Activated CD4-positive, alpha-beta memory T cell treated with anti-CD3 and anti-CD28 coated beads for 36 hours (primary cell): ENCODE measurements at regions of chr11 and their contacts with region 1.

Region 1: DNA sequence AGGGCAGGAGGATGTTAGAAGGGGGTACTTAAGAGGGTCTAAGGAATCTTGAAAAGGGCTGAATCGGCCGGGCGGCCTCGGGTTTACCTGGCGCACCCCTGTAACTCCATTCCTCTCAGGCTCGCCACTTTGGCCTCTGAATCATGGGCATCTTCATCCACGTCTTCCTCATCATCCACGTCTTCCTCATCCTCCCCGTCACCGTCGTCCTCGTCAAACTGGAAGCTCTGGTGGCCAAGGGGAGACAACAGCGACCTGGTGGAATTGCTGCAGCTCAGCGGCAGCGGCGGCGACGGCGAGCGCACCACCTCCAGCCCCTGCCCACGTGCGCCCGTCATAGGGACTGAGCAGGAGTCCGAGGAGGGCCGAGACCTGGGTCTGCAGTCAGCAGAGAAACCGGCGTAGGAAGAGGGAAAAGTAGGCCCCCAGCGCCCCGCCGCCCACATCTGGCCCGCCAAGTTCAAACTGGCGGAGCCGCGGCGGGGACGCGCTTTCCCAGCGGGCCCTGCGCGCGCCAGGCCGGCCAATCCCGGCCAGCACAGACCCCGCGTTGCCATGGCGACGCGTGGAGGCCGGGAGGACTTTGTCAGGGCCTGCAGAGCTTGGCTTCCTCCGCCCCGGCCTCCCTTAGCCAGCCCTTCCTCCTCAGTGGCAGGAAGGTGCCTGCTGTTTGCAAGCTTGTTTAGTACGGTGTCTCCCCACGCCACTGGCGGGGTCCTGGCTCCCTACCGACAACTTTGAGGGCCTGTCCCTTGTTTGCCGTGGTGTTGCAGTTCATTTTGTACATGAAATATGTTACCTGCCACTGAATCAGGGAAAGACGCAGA is at the start of gene CCDC34:
- DNase-seq: peak; percentile 91
- H3K4me3 Mint-ChIP-seq: peak within 1 kb of the TSS; percentile 88
- H3K27ac Mint-ChIP-seq: peak within 1 kb of the TSS; percentile 73
- H3K4me1 Mint-ChIP-seq: peaks cover 20% of the 10 kb centered on the region
- H3K27me3 Mint-ChIP-seq: no peaks in the 10 kb centered on the region
- total RNA-seq, gene CCDC34: 22.8 to 23.7 TPM

Region 2: GRCh38 chr11:27183672-27184457 is 179.1 kb before region 1 on chr11:
- CTCF ChIA-PET with region 1: no interaction called
- POLR2A ChIA-PET with region 1: no interaction called
- intact Hi-C with region 1: loop called (anchors 10 kb)
- DNase-seq: peak; percentile 36
- H3K4me3 Mint-ChIP-seq: no peak overlapping the region
- H3K27ac Mint-ChIP-seq: no peak overlapping the region
- H3K4me1 Mint-ChIP-seq: no peaks in the 10 kb centered on the region
- H3K27me3 Mint-ChIP-seq: peaks cover 4% of the 10 kb centered on the region

Region 3: DNA sequence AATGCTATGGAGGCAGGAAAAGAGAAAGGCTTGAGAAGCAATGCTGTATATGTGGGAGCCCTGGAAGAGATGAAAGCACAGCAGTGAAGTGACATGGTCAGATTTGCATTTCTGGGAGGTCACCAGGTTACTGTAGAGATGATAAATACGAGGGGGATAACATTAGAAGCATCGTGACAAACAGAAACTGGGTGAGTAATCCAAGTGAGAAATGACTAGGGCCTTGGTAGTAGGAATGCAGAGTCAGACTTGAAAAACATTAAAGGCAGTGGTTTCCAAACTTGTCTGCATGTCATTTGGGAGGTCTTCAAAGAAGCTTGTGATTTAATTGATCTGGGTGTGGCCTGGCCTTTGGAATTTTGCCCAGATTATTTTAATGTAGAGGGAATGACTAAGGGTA is 43.9 kb before region 1 on chr11:
- CTCF ChIA-PET with region 1: no interaction called
- POLR2A ChIA-PET with region 1: no interaction called
- intact Hi-C with region 1: loop called (anchors 1 kb)
- DNase-seq: peak; percentile 22
- H3K4me3 Mint-ChIP-seq: no peak overlapping the region
- H3K27ac Mint-ChIP-seq: no peak overlapping the region
- H3K4me1 Mint-ChIP-seq: peaks cover 15% of the 10 kb centered on the region
- H3K27me3 Mint-ChIP-seq: peaks cover 10% of the 10 kb centered on the region

Region 4: GRCh38 chr11:27472398-27473016 is 109.5 kb after region 1 on chr11 and contains the start of gene LGR4:
- CTCF ChIA-PET with region 1: no interaction called
- POLR2A ChIA-PET with region 1: no interaction called
- intact Hi-C with region 1: loop called (anchors 1 kb)
- DNase-seq: peak; percentile 79
- H3K4me3 Mint-ChIP-seq: peak within 1 kb of the TSS; percentile 86
- H3K27ac Mint-ChIP-seq: no peak within 1 kb of the TSS
- H3K4me1 Mint-ChIP-seq: peaks cover 16% of the 10 kb centered on the region
- H3K27me3 Mint-ChIP-seq: peaks cover 20% of the 10 kb centered on the region
- total RNA-seq, gene LGR4: 0.22 to 0.67 TPM

Region 5: DNA sequence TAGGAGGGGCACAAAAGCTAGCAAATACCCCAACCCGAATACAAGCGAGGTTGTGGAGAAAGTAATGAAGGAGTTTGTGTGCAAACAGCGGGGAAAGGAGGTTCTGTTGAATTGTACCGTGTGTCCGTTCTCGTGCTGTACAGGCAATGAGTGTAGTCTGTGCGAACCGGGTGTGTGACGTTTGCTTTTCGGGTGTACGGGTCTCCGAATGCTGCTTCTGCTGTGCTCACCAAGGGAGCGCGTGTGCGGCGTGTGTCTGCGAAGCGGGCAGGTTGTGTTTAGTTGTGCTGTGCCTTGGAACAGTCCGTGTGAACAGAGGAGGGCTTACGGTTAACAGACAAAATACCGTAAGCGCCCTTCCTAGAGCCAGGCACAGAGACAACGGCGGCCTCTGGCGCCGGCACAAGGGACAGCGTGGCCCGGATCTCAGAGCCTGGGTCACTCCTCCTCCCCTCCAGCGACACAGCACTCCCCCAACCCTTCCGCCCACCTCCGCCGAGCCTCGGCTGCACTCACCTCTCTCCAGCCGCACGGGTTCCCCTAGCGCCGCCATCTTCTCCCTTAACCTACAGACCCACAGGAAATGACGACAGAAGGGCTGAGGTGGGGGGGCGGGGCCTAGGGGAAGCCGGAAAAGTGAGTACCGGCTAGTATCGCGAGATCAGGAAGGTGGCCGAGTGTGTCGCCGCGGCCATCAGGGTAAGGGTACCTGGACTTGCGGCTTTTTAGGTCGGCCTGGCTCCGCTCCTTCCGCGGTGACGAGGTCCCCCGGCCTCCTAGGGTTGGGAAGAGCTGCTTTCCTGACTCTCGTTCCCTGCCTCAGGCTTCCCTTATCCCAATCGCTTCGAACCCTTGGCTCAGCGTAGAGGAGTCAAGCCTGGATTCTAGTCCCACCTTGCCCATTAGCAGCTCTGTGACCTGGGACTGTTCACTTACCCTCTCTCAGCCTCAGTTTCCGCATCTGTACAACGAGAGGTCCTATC is 143.5 kb after region 1 on chr11 and contains the start of gene LIN7C:
- CTCF ChIA-PET with region 1: no interaction called
- POLR2A ChIA-PET with region 1: no interaction called
- intact Hi-C with region 1: loop called (anchors 1 kb)
- DNase-seq: peak; percentile 97
- H3K4me3 Mint-ChIP-seq: peak within 1 kb of the TSS; percentile 100
- H3K27ac Mint-ChIP-seq: peak within 1 kb of the TSS; percentile 93
- H3K4me1 Mint-ChIP-seq: peaks cover 40% of the 10 kb centered on the region
- H3K27me3 Mint-ChIP-seq: no peaks in the 10 kb centered on the region
- total RNA-seq, gene LIN7C: 27.6 to 28.7 TPM